HCT116 (cell line): ENCODE measurements at regions of chr20 and their contacts with region 1.

Region 1: GRCh38 chr20:24917797-24918578 is 31.1 kb upstream of the CST7 start:
- DNase-seq: peak; percentile 23
- ATAC-seq: peak; percentile 98
- H3K4me3 ChIP-seq: no peak overlapping the region
- H3K27ac ChIP-seq: no peak overlapping the region
- H3K4me1 ChIP-seq: no peaks in the 10 kb centered on the region
- H3K27me3 ChIP-seq: peaks cover under 1% of the 10 kb centered on the region; the same call in 1 of the 2 replicates
- CTCF ChIP-seq: peak; percentile 56 to 87 (median 84); a peak in 5 of 6 replicates
- POLR2A ChIP-seq: no peak
- RAD21 ChIP-seq: peak; percentile 85

Region 2: DNA sequence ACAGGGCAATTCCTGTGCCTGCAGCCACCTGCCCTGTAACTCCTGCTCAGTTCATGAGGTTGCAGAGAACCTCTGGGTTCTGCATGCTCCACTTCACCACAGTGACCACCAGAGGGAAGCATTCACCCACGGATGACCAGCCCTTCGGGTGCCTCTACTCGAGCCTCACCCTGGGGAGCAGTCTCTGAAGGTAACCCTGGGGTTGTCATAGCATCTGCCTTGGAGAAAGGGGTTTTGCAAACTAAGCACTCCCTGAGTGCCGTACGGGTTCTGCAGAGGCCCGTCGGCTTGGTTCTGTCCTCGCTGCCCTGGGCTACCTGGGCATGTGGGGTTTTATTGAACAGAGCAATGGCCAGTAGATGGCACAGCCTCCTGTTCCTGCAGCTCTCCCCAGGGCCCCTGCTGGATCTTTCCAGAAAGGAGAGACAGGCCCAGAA is 1028.2 kb before region 1 on chr20:
- CTCF ChIA-PET with region 1: no interaction called
- POLR2A ChIA-PET with region 1: no interaction called
- RAD21 ChIA-PET with region 1: no interaction called
- intact Hi-C with region 1: loop called (anchors 1 kb)
- DNase-seq: peak; percentile 10
- ATAC-seq: peak; percentile 97
- H3K4me3 ChIP-seq: no peak overlapping the region
- H3K27ac ChIP-seq: no peak overlapping the region
- H3K4me1 ChIP-seq: no peaks in the 10 kb centered on the region
- H3K27me3 ChIP-seq: peaks cover 16% of the 10 kb centered on the region
- CTCF ChIP-seq: peak; percentile 69 to 75 (median 73)
- POLR2A ChIP-seq: no peak
- RAD21 ChIP-seq: peak; percentile 71

Region 3: DNA sequence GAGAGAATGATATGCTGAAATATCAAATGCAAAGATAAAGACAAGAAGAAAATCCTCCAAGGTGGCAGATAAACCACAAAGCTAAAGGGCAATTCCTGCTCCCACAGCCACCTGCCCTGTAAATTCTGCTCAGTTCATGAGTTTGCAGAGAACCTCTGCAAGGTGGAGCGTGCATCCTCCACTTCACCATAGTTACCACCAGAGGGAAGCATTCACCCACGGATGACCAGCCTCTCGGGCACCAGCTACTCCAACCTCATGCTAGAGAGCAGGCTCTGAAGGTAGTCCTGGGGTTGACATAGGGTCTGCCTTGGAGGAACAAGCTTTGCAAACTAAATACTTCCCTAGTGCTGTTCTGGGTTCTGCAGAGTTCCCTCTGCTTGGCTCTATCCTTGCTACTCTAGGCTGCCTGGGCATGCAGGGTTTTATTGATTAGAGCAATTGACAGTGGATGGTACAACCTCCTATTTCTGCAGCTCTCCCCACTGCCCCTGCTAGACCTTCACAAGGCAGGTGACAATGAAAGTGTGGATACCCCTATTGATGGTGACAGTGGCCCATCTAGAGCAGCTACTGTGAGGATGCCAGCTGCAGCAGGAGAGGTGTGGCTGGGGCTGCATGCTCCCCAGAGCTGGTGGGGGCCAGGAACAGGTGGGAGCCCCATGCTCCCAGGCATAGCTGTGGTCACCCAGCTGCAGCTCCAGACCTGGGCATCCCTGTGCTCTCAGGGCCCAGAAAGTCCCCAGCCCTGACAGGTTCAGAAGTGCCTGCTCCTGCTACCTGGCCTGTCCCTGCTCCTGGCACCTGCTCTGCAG is 980.5 kb before region 1 on chr20:
- CTCF ChIA-PET with region 1: interaction called, 7 read pairs
- POLR2A ChIA-PET with region 1: no interaction called
- RAD21 ChIA-PET with region 1: no interaction called
- intact Hi-C with region 1: loop called (anchors 1 kb)
- DNase-seq: peak; percentile 16
- ATAC-seq: peak; percentile 87
- H3K4me3 ChIP-seq: no peak overlapping the region
- H3K27ac ChIP-seq: no peak overlapping the region
- H3K4me1 ChIP-seq: no peaks in the 10 kb centered on the region
- H3K27me3 ChIP-seq: 0 out of 2 replicates have a peak, but pooled peaks cover 4% of the 10 kb centered on the region
- CTCF ChIP-seq: peak; percentile 28 to 68 (median 50); a peak in 4 of 6 replicates
- POLR2A ChIP-seq: no peak
- RAD21 ChIP-seq: peak; percentile 66

Region 4: GRCh38 chr20:24160563-24161375 is 757.2 kb before region 1 on chr20:
- CTCF ChIA-PET with region 1: no interaction called
- POLR2A ChIA-PET with region 1: no interaction called
- RAD21 ChIA-PET with region 1: no interaction called
- intact Hi-C with region 1: loop called (anchors 2 kb)
- DNase-seq: no peak
- ATAC-seq: no peak
- H3K4me3 ChIP-seq: no peak overlapping the region
- H3K27ac ChIP-seq: no peak overlapping the region
- H3K4me1 ChIP-seq: no peaks in the 10 kb centered on the region
- H3K27me3 ChIP-seq: no peaks in the 10 kb centered on the region
- CTCF ChIP-seq: peak in 2 of 3 experiments; percentile 53 to 58; a peak in 4 of 6 replicates
- POLR2A ChIP-seq: no peak
- RAD21 ChIP-seq: 0 out of 2 replicates have a peak, but pooled peaks have one; percentile 6

Region 5: GRCh38 chr20:24535941-24536730 is 381.9 kb before region 1 on chr20:
- CTCF ChIA-PET with region 1: interaction called, 3 read pairs
- POLR2A ChIA-PET with region 1: no interaction called
- RAD21 ChIA-PET with region 1: no interaction called
- intact Hi-C with region 1: loop called (anchors 10 kb)
- DNase-seq: no peak
- ATAC-seq: no peak
- H3K4me3 ChIP-seq: no peak overlapping the region
- H3K27ac ChIP-seq: no peak overlapping the region
- H3K4me1 ChIP-seq: no peaks in the 10 kb centered on the region
- H3K27me3 ChIP-seq: 0 out of 2 replicates have a peak, but pooled peaks cover 16% of the 10 kb centered on the region
- CTCF ChIP-seq: no peak
- POLR2A ChIP-seq: no peak
- RAD21 ChIP-seq: no peak

Region 6: DNA sequence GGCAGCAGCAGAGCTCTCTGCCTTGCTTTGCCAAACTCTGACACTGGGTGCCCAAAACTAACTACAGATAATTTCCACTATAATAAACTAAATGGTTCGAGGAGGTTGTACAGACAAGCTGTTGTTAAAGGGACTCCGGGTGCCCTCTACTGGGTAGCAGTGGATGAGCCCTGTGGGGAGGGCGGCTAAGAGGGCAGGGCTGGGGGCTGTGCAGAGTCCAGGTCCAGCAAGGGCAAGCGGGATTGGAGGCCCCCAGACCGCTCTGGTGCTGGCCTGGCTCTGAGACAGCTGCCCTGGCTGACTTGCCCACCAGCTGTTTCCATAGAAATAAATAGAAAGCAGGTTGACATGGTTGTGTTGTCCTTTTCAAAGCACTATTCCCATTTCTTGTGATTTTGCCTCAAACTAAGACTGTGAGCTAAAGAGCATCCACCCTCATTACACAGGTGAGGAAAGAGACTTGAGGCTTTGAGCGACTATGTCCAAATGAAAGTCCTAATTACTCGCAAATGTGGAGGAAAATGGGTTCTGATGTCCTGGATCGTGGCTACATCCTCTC is 136.5 kb before region 1 on chr20:
- CTCF ChIA-PET with region 1: interaction called, 9 read pairs
- POLR2A ChIA-PET with region 1: no interaction called
- RAD21 ChIA-PET with region 1: interaction called in 1 of 2 experiments, 5 read pairs
- intact Hi-C with region 1: loop called (anchors 1 kb)
- DNase-seq: no peak
- ATAC-seq: peak; percentile 81
- H3K4me3 ChIP-seq: no peak overlapping the region
- H3K27ac ChIP-seq: no peak overlapping the region
- H3K4me1 ChIP-seq: no peaks in the 10 kb centered on the region
- H3K27me3 ChIP-seq: peaks cover 20% of the 10 kb centered on the region; the same call in 1 of the 2 replicates
- CTCF ChIP-seq: peak; percentile 30 to 57 (median 51); a peak in 5 of 6 replicates
- POLR2A ChIP-seq: no peak
- RAD21 ChIP-seq: peak; percentile 63